ENCODE measurements at regions of chr2 and their contacts with region 1.

Region 1: DNA sequence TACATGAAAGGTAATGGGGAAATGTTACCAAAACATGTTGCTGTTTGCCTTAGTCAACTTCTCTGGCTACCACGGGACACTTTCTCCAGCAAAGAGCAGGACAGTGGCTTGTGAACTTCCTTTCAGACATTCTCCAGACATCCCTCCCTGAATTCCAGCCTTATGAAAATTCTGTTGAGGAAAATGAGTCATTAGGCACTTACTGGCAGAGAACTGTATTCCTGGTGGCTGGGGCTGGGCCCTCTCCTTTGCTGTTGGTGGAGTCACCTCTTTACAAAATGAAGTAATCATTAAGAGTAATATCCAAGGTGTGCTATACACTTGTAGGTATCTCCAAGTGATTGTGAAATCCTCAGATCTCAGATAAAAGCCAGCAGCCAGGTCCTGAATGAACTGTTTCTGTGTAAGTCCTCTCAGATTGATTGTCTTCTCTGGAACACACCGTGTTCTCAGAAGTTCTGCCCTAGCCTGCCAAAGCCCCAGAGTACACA is 1.3 kb upstream of the FAP start:
- DNase-seq: peak; percentile 95
- H3K4me3 ChIP-seq: peak overlapping the region; percentile 2 to 75 (median 62)
- H3K27ac ChIP-seq: peak overlapping the region; percentile 90
- H3K4me1 ChIP-seq: peaks cover 39% of the 10 kb centered on the region
- H3K27me3 ChIP-seq: no peaks in the 10 kb centered on the region
- CTCF ChIP-seq: no peak

Region 2: GRCh38 chr2:162091325-162092007 is 153.1 kb before region 1 on chr2:
- CTCF ChIA-PET with region 1: no interaction called
- dilution Hi-C with region 1: no loop called
- in situ Hi-C with region 1: no loop called
- intact Hi-C with region 1: loop called (anchors 5 kb)
- DNase-seq: peak; percentile 90
- H3K4me3 ChIP-seq: no peak overlapping the region
- H3K27ac ChIP-seq: peak overlapping the region; percentile 93
- H3K4me1 ChIP-seq: peaks cover 66% of the 10 kb centered on the region
- H3K27me3 ChIP-seq: no peaks in the 10 kb centered on the region
- CTCF ChIP-seq: peak; percentile 36 to 51

Region 3: DNA sequence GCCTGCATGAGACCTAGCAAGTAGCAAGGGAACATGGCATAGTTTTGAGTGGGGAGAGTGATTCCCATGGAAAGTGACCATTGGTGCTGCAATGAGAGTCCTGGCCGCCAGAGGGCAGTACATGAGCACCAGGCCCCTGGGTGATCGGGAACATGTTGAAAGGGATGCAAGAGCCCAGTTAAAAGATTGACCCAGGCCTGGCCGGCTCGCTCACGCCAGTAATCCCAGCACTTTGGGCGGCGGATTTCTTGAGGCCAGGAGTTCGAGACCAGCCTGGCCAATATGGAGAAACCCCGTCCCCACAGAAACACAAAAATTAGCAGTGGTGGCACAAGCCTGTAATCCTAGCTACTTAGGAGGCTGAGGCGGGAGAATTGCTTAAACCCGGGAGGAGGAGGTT is 23.5 kb before region 1 on chr2:
- CTCF ChIA-PET with region 1: interaction called, 4 read pairs
- dilution Hi-C with region 1: no loop called
- in situ Hi-C with region 1: no loop called
- intact Hi-C with region 1: loop called (anchors 1 kb)
- DNase-seq: peak; percentile 37
- H3K4me3 ChIP-seq: no peak overlapping the region
- H3K27ac ChIP-seq: no peak overlapping the region
- H3K4me1 ChIP-seq: no peaks in the 10 kb centered on the region
- H3K27me3 ChIP-seq: no peaks in the 10 kb centered on the region
- CTCF ChIP-seq: peak; percentile 96 to 99

Region 4: DNA sequence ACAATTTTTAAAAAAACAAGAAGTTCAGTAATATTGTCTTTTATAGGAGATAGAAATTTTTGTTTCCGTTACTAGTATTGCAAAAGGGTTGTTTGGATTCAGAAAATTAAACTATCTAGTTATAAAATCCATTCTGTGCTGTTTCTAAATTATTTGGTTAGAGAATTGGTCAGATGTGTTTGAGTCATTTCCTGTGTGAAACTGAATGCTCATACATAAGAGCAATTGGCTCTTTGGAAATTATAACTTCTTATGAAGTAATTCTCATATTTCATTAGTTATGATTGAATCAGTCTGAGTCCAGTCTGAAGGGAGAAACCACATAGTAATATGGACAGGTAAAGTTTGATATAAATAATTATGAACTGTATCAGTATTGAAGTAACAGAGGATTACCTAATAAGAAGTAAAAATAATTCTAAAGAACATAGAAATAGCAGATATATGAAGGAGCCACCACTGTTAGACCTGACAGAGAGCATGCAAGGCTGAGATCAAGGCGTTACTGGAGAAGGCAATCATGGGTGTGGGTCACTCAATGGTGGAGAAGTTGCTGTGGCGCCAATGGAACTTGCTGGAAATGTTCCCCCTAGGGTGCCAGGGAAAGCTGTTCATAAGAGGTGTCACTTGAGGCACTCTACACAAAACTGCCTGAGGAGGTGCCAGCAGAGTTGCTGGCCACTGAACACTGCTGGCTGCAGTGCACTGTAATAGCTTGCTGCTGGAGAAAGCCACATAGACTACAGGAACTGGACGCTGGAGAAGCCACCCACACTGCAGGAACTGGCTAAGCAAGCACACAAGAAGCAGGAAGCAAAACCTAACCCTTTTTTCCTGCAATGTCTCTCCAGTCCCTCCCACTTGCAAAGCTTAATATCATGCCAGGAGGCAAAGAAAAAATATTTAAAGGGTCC is 16.7 kb after region 1 on chr2:
- CTCF ChIA-PET with region 1: no interaction called
- dilution Hi-C with region 1: no loop called
- in situ Hi-C with region 1: no loop called
- intact Hi-C with region 1: loop called (anchors 1 kb)
- DNase-seq: peak; percentile 74
- H3K4me3 ChIP-seq: peak overlapping the region in 1 of 3 experiments; percentile 29
- H3K27ac ChIP-seq: peak overlapping the region; percentile 77
- H3K4me1 ChIP-seq: peaks cover 26% of the 10 kb centered on the region
- H3K27me3 ChIP-seq: no peaks in the 10 kb centered on the region
- CTCF ChIP-seq: no peak

Region 5: GRCh38 chr2:162293122-162293786 is 48.7 kb after region 1 on chr2:
- CTCF ChIA-PET with region 1: interaction called, 10 read pairs
- dilution Hi-C with region 1: no loop called
- in situ Hi-C with region 1: no loop called
- intact Hi-C with region 1: loop called (anchors 1 kb)
- DNase-seq: peak; percentile 61
- H3K4me3 ChIP-seq: no peak overlapping the region
- H3K27ac ChIP-seq: peak overlapping the region; percentile 6
- H3K4me1 ChIP-seq: peaks cover 7% of the 10 kb centered on the region
- H3K27me3 ChIP-seq: no peaks in the 10 kb centered on the region
- CTCF ChIP-seq: no peak

Region 6: DNA sequence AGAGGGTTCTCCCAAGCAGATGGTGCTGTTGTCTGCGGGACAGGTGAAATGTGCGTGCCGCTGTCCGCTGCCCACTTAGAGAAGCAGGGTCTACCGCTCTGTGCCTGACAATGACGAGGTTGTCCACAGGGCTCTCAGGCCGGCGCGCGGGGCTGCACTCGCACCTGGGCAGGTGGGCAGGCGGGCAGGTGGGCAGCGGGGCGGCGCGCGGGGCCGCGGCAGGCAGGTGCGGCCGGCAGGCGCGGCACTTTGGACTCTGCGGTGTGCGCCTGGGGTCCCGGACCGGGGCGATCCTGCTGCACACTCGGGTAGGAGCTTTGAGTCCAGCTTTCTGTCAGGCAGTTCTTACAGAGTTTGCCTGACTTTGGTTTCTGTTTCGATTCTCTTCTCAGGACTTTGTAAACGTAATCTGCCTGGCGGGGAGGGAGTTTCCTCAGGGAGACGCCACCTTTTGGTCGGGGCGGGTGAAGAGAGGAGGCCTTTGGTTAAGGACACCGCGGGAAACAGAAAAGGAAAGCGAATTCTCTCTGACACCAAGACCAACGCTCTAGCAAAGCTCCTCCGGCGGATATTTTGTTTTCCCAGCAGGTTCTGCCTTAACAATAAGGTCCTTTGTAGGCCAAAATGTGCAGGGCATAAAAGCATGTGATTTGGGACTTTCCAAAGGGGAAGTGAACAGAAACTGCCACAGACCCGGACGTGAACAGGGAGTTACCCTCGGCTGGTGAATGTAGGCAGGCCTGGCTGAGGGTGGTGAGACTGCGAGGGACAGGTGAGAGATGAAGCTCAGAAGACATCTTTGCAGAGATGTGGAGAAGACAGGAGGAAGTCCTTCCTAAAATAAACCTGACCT is 74.0 kb after region 1 on chr2 and contains the start of gene IFIH1:
- CTCF ChIA-PET with region 1: no interaction called
- dilution Hi-C with region 1: loop called (anchors 5 kb)
- in situ Hi-C with region 1: no loop called
- intact Hi-C with region 1: no loop called
- DNase-seq: peak; percentile 92
- H3K4me3 ChIP-seq: peak within 1 kb of the TSS; percentile 49 to 87 (median 71)
- H3K27ac ChIP-seq: peak within 1 kb of the TSS; percentile 89
- H3K4me1 ChIP-seq: peaks cover 6% of the 10 kb centered on the region
- H3K27me3 ChIP-seq: no peaks in the 10 kb centered on the region
- CTCF ChIP-seq: peak in 1 of 2 donors; percentile 51
- total RNA-seq, gene IFIH1: 6.3 to 6.7 TPM